CD4-positive, alpha-beta memory T cell (primary cell): ENCODE measurements at regions of chr11 and their contacts with region 1.

Region 1: DNA sequence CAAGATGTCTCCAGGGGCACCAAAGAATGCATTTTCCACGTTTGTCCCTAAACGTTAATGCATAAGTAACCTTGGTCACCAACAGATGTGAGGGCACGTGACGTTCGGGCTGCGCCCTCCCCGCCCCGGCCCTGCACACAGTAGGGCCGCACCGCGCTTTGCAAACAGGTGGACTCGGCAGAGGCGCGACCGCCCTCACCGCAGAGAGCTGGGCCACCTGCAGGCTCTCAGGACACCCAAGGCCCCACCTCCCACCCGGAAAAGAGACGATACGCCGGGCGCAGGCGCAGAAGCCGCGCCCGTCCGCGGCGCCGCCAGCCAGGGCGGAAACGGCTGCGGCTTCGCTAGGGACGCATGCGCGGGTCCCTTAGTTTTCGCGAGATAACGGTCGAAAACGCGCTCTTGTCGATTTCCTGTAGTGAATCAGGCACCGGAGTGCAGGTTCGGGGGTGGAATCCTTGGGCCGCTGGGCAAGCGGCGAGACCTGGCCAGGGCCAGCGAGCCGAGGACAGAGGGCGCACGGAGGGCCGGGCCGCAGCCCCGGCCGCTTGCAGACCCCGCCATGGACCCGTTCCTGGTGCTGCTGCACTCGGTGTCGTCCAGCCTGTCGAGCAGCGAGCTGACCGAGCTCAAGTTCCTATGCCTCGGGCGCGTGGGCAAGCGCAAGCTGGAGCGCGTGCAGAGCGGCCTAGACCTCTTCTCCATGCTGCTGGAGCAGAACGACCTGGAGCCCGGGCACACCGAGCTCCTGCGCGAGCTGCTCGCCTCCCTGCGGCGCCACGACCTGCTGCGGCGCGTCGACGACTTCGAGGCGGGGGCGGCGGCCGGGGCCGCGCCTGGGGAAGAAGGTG is at the start of gene FADD:
- DNase-seq: peak; percentile 90 to 92 (median 90)
- H3K4me3 ChIP-seq: peak within 1 kb of the TSS; percentile 90 to 100
- H3K4me3 Mint-ChIP-seq: peak within 1 kb of the TSS; percentile 91 to 97 (median 96)
- H3K27ac ChIP-seq: peak within 1 kb of the TSS; percentile 95
- H3K27ac Mint-ChIP-seq: peak within 1 kb of the TSS; percentile 95 to 100 (median 98)
- H3K4me1 ChIP-seq: peaks cover 48% of the 10 kb centered on the region
- H3K4me1 Mint-ChIP-seq: peaks cover 24 to 51% (median 36%) of the 10 kb centered on the region in 4 donors
- H3K27me3 ChIP-seq: no peaks in the 10 kb centered on the region
- H3K27me3 Mint-ChIP-seq: no peaks in the 10 kb centered on the region
- total RNA-seq, gene FADD: 43.6 to 48.0 TPM

Region 2: GRCh38 chr11:69675811-69676371 is 527.2 kb before region 1 on chr11:
- CTCF ChIA-PET with region 1: interaction called, 8 read pairs
- POLR2A ChIA-PET with region 1: no interaction called
- intact Hi-C with region 1: loop called (anchors 5 kb)
- DNase-seq: no peak
- H3K4me3 ChIP-seq: peak overlapping the region; percentile 52 to 94
- H3K4me3 Mint-ChIP-seq: peak overlapping the region; percentile 91 to 97 (median 94)
- H3K27ac ChIP-seq: peak overlapping the region; percentile 80
- H3K27ac Mint-ChIP-seq: peak overlapping the region in 3 of 7 donors; percentile 86 to 97 (median 94)
- H3K4me1 ChIP-seq: peaks cover 34% of the 10 kb centered on the region
- H3K4me1 Mint-ChIP-seq: peaks cover 12 to 35% (median 27%) of the 10 kb centered on the region in 4 donors
- H3K27me3 ChIP-seq: no peaks in the 10 kb centered on the region
- H3K27me3 Mint-ChIP-seq: peaks cover 0 to 2% of the 10 kb centered on the region in 2 donors

Region 3: DNA sequence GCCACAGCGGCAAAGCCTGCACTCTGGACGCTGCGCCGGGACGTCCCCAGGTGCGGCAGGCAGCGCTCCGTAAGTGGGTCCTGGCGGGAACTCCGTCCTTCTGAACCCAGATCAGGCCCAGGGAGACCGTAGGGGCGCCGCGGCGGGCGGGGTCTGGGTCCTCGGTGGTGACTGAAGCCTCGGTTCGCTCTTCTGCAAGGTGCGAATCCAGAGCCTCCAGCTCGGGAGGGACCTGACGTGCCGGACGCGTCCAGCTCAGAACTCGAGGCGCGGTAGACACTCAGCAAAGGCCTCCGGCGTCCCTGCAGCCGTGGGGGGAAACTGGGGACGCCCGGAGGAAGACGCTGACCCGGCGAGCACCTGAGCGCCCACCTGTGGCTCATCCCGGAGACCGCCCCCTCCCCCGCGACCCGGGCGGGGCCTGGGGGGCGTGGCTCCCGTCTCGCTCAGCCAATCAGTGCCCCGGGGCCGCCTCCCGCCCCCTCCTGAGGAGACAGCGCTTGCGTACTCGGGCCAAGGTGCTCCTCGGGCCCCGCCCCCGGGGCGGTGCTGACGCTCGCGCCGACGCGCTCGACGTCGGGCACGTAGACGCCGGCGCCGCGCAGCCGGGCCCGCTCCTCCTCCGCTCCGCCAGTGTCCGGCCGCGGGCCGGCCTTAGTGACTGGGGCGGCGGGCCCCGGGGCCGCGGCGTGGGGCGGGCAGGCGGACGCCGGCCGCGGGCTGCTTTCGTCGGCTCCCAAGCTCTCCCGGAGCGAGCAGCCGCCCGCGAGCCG is 67.2 kb after region 1 on chr11 and contains the start of gene PPFIA1:
- CTCF ChIA-PET with region 1: interaction called, 4 read pairs
- POLR2A ChIA-PET with region 1: interaction called, 22 read pairs
- intact Hi-C with region 1: loop called (anchors 1 kb)
- DNase-seq: peak; percentile 94 to 98 (median 96)
- H3K4me3 ChIP-seq: peak within 1 kb of the TSS; percentile 78 to 94
- H3K4me3 Mint-ChIP-seq: peak within 1 kb of the TSS; percentile 90 to 97 (median 92)
- H3K27ac ChIP-seq: peak within 1 kb of the TSS; percentile 76
- H3K27ac Mint-ChIP-seq: peak within 1 kb of the TSS; percentile 81 to 97 (median 90)
- H3K4me1 ChIP-seq: peaks cover 45% of the 10 kb centered on the region
- H3K4me1 Mint-ChIP-seq: peaks cover 21 to 48% (median 37%) of the 10 kb centered on the region in 4 donors
- H3K27me3 ChIP-seq: no peaks in the 10 kb centered on the region
- H3K27me3 Mint-ChIP-seq: peaks cover 4 to 13% of the 10 kb centered on the region in 2 donors
- total RNA-seq, gene PPFIA1: 52.0 to 54.8 TPM

Region 4: GRCh38 chr11:70326365-70326811 is 123.3 kb after region 1 on chr11:
- CTCF ChIA-PET with region 1: no interaction called
- POLR2A ChIA-PET with region 1: no interaction called
- intact Hi-C with region 1: no loop called
- DNase-seq: no peak
- H3K4me3 ChIP-seq: no peak overlapping the region
- H3K4me3 Mint-ChIP-seq: no peak overlapping the region
- H3K27ac ChIP-seq: no peak overlapping the region
- H3K27ac Mint-ChIP-seq: no peak overlapping the region
- H3K4me1 ChIP-seq: no peaks in the 10 kb centered on the region
- H3K4me1 Mint-ChIP-seq: no peaks in the 10 kb centered on the region
- H3K27me3 ChIP-seq: no peaks in the 10 kb centered on the region
- H3K27me3 Mint-ChIP-seq: no peaks in the 10 kb centered on the region